Tibial artery (tissue), 4 donors: ENCODE measurements at regions of chr7 and their contacts with region 1.

Region 1: DNA sequence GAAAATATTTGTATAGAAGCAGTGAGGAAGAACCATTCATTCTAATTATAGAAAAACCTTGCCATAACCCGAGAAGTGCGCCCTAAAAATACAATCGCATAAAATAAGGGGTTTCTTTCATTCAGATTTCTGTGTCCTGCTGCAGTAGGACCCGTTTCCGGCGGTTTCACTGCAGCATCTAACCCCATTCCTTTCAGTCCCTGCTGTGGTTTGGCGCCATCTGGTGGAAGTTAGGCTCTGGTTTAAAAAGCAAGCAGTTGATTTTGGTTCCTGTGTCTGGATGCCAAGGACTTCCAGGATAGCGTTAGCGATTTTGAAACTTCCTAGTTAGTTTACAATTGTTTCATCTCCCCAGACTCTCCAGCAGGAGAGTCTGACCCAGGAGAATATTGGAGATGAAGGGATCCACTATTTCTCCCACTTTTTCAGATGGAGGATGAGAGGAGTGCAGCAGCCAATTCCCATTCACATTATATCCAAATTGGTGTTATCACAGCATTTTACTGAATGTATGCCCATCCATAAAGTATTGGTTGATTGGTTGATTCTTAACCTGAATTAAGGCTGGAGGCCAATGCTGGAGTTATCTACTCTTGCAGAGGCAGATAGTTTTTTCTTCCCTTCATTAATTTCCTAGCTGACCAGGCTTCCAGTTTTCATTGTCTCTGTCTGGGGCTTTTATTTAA is 128.8 kb upstream of the CACNA2D1 start:
- DNase-seq: peak; percentile 88 to 92
- H3K4me3 ChIP-seq: no peak overlapping the region
- H3K27ac ChIP-seq: no peak overlapping the region
- H3K4me1 ChIP-seq: peaks cover 0 to 6% (median 2%) of the 10 kb centered on the region in 4 donors
- H3K27me3 ChIP-seq: no peaks in the 10 kb centered on the region
- CTCF ChIP-seq: peak; percentile 76 to 91

Region 2: GRCh38 chr7:81499262-81500116 is 1072.8 kb before region 1 on chr7:
- intact Hi-C with region 1: loop called (anchors 10 kb)
- DNase-seq: no peak
- H3K4me3 ChIP-seq: no peak overlapping the region
- H3K27ac ChIP-seq: peak overlapping the region in 1 of 2 donors; percentile 46
- H3K4me1 ChIP-seq: peaks cover 0 to 23% (median 4%) of the 10 kb centered on the region in 4 donors
- H3K27me3 ChIP-seq: no peaks in the 10 kb centered on the region
- CTCF ChIP-seq: peak; percentile 66 to 79

Region 3: GRCh38 chr7:82044497-82045080 is 527.7 kb before region 1 on chr7:
- intact Hi-C with region 1: loop called (anchors 2 kb)
- DNase-seq: peak in 1 of 2 donors; percentile 34
- H3K4me3 ChIP-seq: no peak overlapping the region
- H3K27ac ChIP-seq: no peak overlapping the region
- H3K4me1 ChIP-seq: peaks cover 0 to 3% (median 0%) of the 10 kb centered on the region in 4 donors
- H3K27me3 ChIP-seq: no peaks in the 10 kb centered on the region
- CTCF ChIP-seq: peak; percentile 62

Region 4: GRCh38 chr7:82234457-82235049 is 337.8 kb before region 1 on chr7:
- intact Hi-C with region 1: loop called (anchors 10 kb)
- DNase-seq: no peak
- H3K4me3 ChIP-seq: no peak overlapping the region
- H3K27ac ChIP-seq: no peak overlapping the region
- H3K4me1 ChIP-seq: no peaks in the 10 kb centered on the region
- H3K27me3 ChIP-seq: no peaks in the 10 kb centered on the region
- CTCF ChIP-seq: peak; percentile 51 to 57

Region 5: GRCh38 chr7:82559193-82559805 is 13.0 kb before region 1 on chr7:
- intact Hi-C with region 1: no loop called
- DNase-seq: no peak
- H3K4me3 ChIP-seq: no peak overlapping the region
- H3K27ac ChIP-seq: no peak overlapping the region
- H3K4me1 ChIP-seq: no peaks in the 10 kb centered on the region
- H3K27me3 ChIP-seq: no peaks in the 10 kb centered on the region
- CTCF ChIP-seq: no peak